Left colon (tissue), 2 donors: ENCODE measurements at regions of chr9 and their contacts with region 1.

Region 1: DNA sequence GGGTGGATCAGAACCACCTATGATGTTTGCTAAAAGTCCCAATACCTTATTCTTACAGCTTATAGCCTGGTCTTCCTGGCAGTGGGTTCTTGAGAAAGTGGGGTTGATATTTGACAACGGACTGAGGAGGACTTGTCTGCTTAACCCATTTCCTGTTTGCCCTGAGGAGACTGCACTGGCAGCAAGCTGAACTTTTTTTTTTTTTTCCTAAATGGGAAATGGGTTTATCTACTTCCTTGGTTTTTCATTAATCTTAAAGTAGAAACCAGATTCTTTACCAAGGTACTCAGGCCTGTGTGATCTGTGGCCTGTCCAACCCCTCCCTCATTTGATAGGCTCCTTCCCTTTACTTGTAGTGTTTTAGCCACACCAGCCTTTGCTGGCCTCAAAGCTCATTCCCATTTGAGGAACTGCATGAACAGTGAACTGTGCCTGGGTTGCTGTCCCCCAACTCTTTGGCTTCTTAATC is 47.1 kb downstream of the C9orf57 start:
- DNase-seq: no peak
- ATAC-seq: no peak

Region 2: GRCh38 chr9:71819115-71819739 is 194.1 kb before region 1 on chr9:
- intact Hi-C with region 1: loop called in 1 of 2 experiments (anchors 10 kb)
- DNase-seq: peak in 1 of 2 donors; percentile 38
- ATAC-seq: no peak